ENCODE measurements at regions of chr2 and their contacts with region 1.

Region 1: GRCh38 chr2:222690564-222691200 is 19.2 kb downstream of the MOGAT1 start:
- DNase-seq: peak; percentile 78
- ATAC-seq: peak; percentile 92
- H3K4me3 ChIP-seq: no peak overlapping the region
- H3K27ac ChIP-seq: no peak overlapping the region
- H3K4me1 ChIP-seq: no peaks in the 10 kb centered on the region
- H3K27me3 ChIP-seq: no peaks in the 10 kb centered on the region; the same call in 1 of the 2 replicates
- CTCF ChIP-seq: peak; percentile 100
- POLR2A ChIP-seq: no peak
- RAD21 ChIP-seq: peak; percentile 85

Region 2: DNA sequence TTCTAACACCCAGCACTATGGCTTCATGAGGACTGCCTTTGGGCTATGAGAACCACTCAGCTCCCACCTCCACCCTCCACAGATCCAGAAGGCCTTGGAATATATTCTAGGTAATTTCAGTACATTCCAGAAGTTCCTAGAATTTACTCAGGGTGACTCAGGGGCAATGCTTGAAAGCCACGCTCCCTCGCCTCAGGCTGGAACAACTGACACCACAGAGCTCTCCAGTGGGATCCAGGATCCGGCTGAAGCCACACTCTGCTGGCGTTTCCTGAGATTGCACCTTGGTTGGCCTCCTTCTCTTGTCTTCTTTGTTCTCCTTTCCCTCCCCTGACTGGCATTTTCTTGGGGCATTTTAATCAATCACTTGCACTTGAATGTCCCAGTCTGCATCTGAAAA is 268.7 kb after region 1 on chr2:
- CTCF ChIA-PET with region 1: interaction called, 7 read pairs
- POLR2A ChIA-PET with region 1: no interaction called
- dilution Hi-C with region 1: no loop called
- in situ Hi-C with region 1: no loop called
- intact Hi-C with region 1: loop called (anchors 5 kb)
- DNase-seq: peak; percentile 87
- ATAC-seq: peak; percentile 98
- H3K4me3 ChIP-seq: no peak overlapping the region
- H3K27ac ChIP-seq: peak overlapping the region; percentile 71
- H3K4me1 ChIP-seq: peaks cover 7% of the 10 kb centered on the region
- H3K27me3 ChIP-seq: no peaks in the 10 kb centered on the region
- CTCF ChIP-seq: peak; percentile 55
- POLR2A ChIP-seq: no peak
- RAD21 ChIP-seq: peak; percentile 67